PC-9 (cell line): ENCODE measurements at regions of chr19 and their contacts with region 1.

Region 1: GRCh38 chr19:39846176-39846677 is at the start of gene FBL:
- DNase-seq: peak; percentile 71 to 96
- H3K4me3 ChIP-seq: peak within 1 kb of the TSS; percentile 96
- H3K27ac ChIP-seq: no peak within 1 kb of the TSS
- H3K4me1 ChIP-seq: peaks cover 23% of the 10 kb centered on the region
- H3K27me3 ChIP-seq: no peaks in the 10 kb centered on the region
- CTCF ChIP-seq: no peak
- total RNA-seq, gene FBL: 437 and 498 TPM in 2 replicates

Region 2: DNA sequence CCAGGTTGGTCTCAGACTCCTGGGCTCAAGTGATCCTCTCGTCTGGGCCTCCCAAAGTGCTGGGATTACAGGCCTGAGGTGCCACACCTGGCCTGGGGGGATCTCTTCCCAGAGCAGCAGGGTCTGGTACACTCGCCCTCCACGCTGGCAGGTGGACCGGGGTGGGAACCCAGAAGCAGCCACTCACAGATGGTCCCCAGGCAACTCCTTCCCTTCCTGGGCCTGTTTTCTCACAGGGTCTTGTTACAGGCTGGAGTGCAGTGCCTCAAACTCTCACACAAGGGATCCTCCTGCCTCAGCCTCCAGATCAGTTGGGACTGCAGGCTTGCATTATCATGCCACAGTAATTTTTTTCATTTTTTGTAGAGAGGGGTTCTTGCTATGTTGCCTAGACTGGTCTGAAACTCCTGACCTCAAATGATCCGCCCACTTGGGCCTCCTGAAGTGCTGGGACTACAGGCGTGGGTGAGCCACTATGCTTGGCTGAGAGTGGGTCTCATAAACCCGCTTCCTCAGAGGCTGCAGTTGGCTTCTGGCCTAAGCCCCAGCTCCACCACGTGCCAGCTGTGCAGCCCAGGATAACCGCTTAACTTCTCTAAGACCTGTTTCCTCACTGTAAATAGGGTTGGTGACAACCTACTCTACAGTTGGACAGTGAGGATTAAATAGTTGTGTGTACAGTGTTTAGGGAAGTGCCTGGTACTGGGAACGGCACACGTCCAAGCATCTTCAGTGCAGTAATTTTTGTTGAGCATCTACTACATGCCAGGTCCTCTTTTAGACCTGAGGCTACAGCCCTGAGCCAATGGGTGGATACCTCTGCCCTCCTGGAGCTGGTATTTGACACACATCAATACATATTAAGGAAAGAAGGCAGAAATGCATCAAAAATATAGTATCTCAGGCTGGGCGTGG is 933.4 kb before region 1 on chr19:
- CTCF ChIA-PET with region 1: no interaction called
- POLR2A ChIA-PET with region 1: no interaction called
- intact Hi-C with region 1: no loop called
- DNase-seq: peak in 1 of 2 experiments; percentile 39
- H3K4me3 ChIP-seq: no peak overlapping the region
- H3K27ac ChIP-seq: no peak overlapping the region
- H3K4me1 ChIP-seq: no peaks in the 10 kb centered on the region
- H3K27me3 ChIP-seq: no peaks in the 10 kb centered on the region
- CTCF ChIP-seq: no peak

Region 3: DNA sequence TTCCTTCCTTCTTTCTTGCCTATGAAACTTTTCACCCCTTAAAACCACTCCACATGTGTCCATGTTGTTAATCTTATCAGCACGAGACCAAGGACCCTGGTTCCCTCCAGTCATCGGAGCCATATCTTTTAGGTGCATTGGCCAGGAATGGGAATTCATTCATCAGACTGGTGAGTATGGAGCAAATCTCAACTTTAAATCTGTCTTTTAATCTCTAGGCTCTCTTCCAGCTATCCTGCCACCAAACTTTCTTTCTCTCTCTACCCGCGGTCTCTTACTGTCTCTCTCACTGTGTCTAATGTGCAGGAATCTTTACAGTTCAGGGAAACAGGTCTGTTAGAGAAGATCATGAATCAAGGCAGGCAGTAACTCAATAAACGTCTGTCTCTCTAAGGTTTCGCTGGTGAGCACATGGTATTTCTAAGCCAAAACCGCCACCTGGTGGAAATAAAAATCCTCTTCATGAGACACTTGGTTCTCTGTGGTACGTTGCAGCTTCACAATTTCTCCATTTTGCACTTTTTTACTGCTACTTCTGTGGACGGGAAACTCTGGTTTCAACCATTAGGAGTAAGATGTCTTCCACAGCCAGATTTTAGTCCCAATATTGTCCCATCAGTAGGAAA is 174.4 kb before region 1 on chr19:
- CTCF ChIA-PET with region 1: interaction called, 3 read pairs
- POLR2A ChIA-PET with region 1: no interaction called
- intact Hi-C with region 1: loop called (anchors 5 kb)
- DNase-seq: peak in 1 of 2 experiments; percentile 42
- H3K4me3 ChIP-seq: no peak overlapping the region
- H3K27ac ChIP-seq: no peak overlapping the region
- H3K4me1 ChIP-seq: no peaks in the 10 kb centered on the region
- H3K27me3 ChIP-seq: peaks cover 24% of the 10 kb centered on the region; the same call in 1 of the 2 replicates
- CTCF ChIP-seq: peak; percentile 71

Region 4: DNA sequence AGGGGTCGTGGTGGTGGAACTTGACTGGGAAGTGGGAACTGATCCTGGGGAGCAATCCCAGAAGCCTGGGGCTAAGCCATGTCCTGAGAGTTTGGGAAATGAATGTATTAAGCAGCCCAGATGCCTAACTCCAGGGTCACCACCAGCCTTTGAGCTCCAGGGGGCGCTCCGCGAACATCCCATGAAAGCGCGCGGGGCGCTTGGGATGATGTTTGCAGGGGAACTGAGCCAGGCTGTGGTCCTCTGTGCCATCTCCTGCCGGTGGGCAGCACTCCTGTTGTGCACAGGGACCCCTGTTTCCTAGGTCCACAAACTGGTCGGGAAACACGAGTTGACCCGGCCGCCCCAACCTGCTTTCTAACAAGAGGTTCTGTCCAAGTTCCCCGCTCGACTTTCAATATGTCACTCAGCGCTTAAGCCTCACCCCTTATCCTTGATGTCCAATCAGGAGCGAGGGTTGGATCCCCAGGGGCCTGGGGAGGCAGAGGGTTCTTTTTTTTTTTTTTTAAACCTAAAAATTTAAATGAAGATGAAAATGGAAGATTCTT is 53.2 kb before region 1 on chr19:
- CTCF ChIA-PET with region 1: interaction called, 13 read pairs
- POLR2A ChIA-PET with region 1: interaction called, 3 read pairs
- intact Hi-C with region 1: no loop called
- DNase-seq: peak in 1 of 2 experiments; percentile 66
- H3K4me3 ChIP-seq: no peak overlapping the region
- H3K27ac ChIP-seq: no peak overlapping the region
- H3K4me1 ChIP-seq: no peaks in the 10 kb centered on the region
- H3K27me3 ChIP-seq: peaks cover 9% of the 10 kb centered on the region
- CTCF ChIP-seq: peak; percentile 85

Region 5: GRCh38 chr19:39864118-39864517 is 17.9 kb after region 1 on chr19:
- CTCF ChIA-PET with region 1: interaction called, 12 read pairs
- POLR2A ChIA-PET with region 1: no interaction called
- intact Hi-C with region 1: no loop called
- DNase-seq: no peak
- H3K4me3 ChIP-seq: no peak overlapping the region
- H3K27ac ChIP-seq: no peak overlapping the region
- H3K4me1 ChIP-seq: no peaks in the 10 kb centered on the region
- H3K27me3 ChIP-seq: peaks cover 9% of the 10 kb centered on the region
- CTCF ChIP-seq: no peak